ENCODE measurements at regions of chr18 and their contacts with region 1.

Region 1: DNA sequence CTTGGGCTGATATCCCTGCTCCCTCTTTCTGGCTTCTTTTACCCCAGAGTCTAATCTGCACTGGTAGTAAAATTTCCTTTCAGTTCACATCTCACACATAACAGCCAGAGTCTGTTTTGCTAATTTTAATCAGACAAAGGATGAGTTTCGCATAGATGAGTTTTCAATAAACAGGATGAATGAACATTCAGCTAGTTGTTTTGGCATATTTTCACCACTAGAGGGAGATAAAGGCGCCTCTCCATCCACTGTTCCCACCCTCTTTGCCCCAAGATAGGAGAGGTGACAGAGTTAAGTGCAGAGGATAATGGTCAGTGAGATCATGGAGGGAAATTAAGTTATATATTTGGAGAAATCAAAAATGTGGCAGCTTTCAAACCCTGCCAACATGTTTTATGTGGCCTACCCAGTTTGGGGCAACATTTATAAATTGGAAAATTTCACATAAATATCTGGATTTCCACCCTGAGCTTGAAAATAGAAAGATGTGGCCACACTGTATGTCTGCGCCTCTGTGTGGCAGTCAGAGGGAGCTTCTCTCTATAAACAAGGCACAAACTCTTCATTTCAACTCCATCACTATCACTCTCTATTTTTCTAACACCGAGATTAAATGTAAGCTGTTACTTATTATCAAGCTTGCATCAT is 48.5 kb upstream of the DTNA start:
- DNase-seq: peak; percentile 39
- H3K4me3 ChIP-seq: no peak overlapping the region
- H3K27ac ChIP-seq: no peak overlapping the region
- H3K4me1 ChIP-seq: peaks cover 16% of the 10 kb centered on the region
- H3K27me3 ChIP-seq: no peaks in the 10 kb centered on the region
- CTCF ChIP-seq: peak; percentile 84 to 88

Region 2: GRCh38 chr18:34352385-34353163 is 309.0 kb before region 1 on chr18:
- CTCF ChIA-PET with region 1: no interaction called
- dilution Hi-C with region 1: no loop called
- in situ Hi-C with region 1: no loop called
- intact Hi-C with region 1: loop called (anchors 10 kb)
- DNase-seq: no peak
- H3K4me3 ChIP-seq: no peak overlapping the region
- H3K27ac ChIP-seq: no peak overlapping the region
- H3K4me1 ChIP-seq: no peaks in the 10 kb centered on the region
- H3K27me3 ChIP-seq: no peaks in the 10 kb centered on the region
- CTCF ChIP-seq: peak in 1 of 2 donors; percentile 23

Region 3: DNA sequence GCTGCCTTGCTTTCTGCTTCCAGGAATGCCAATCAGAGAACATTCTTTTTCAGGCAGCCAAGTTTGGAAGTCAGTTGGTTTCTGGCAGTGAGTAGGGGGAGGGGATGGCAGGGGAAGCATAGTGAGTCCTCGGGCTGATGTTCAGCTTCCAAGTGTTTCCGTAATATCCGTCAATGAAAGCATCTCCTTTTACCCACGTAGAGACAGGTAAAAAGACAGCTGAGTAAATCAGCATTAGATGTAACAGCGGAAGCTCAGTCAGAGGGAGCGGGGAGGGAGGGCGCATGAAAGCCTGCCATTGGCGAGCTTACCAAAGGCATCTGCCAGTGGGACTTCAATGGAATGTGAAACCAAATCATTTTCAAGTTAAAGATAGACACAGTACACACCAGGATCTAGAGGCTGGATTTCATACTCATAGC is 68.6 kb before region 1 on chr18:
- CTCF ChIA-PET with region 1: interaction called, 4 read pairs
- dilution Hi-C with region 1: no loop called
- in situ Hi-C with region 1: no loop called
- intact Hi-C with region 1: loop called (anchors 1 kb)
- DNase-seq: peak; percentile 76
- H3K4me3 ChIP-seq: peak overlapping the region in 2 of 3 experiments; percentile 9 to 28
- H3K27ac ChIP-seq: no peak overlapping the region
- H3K4me1 ChIP-seq: no peaks in the 10 kb centered on the region
- H3K27me3 ChIP-seq: no peaks in the 10 kb centered on the region
- CTCF ChIP-seq: no peak

Region 4: DNA sequence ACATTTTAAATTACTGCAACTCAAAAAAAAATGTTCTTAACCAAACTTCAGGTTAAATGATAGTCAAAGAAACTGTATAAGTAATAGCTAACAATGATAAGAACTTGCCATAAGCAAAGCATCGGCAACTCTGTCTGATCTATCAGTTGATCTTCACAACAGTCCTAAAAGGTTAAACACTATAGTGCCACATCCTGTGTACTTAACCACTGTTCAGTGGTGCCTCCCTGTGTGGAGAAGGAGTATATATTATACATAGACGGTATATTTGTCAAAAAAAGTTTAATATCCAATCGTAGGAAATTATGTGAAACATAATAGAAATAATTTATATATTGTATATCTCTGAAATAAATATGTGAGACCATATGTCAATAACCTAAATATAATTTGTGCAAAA is 61.6 kb after region 1 on chr18:
- CTCF ChIA-PET with region 1: no interaction called
- dilution Hi-C with region 1: no loop called
- in situ Hi-C with region 1: no loop called
- intact Hi-C with region 1: loop called (anchors 1 kb)
- DNase-seq: no peak
- H3K4me3 ChIP-seq: no peak overlapping the region
- H3K27ac ChIP-seq: no peak overlapping the region
- H3K4me1 ChIP-seq: no peaks in the 10 kb centered on the region
- H3K27me3 ChIP-seq: no peaks in the 10 kb centered on the region
- CTCF ChIP-seq: peak in 1 of 2 donors; percentile 40

Region 5: GRCh38 chr18:34787931-34788532 is 126.4 kb after region 1 on chr18:
- CTCF ChIA-PET with region 1: interaction called, 7 read pairs
- dilution Hi-C with region 1: no loop called
- in situ Hi-C with region 1: loop called (anchors 25 kb)
- intact Hi-C with region 1: loop called (anchors 1 kb)
- DNase-seq: peak; percentile 42
- H3K4me3 ChIP-seq: no peak overlapping the region
- H3K27ac ChIP-seq: no peak overlapping the region
- H3K4me1 ChIP-seq: no peaks in the 10 kb centered on the region
- H3K27me3 ChIP-seq: no peaks in the 10 kb centered on the region
- CTCF ChIP-seq: peak; percentile 67 to 71